OCI-LY7 (cell line): ENCODE measurements at regions of chr3 and their contacts with region 1.

Region 1: DNA sequence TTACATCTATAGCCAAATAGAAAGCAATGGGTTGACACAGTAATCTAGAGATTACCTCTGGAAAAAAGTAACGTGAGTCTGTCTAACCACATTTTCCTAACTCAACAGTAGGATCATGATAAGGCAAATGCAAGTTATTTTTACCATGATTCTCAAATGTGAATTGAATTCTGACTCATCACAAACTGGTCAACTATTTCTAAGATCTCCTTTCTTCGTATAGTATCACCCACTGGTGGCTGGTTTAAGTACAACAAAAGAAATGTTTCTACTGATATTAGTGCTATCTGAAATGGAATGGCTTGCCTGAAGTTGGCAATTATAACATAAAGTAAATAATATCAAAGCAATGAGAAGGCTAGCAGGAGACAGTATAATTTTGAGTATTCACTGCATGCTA is 102.2 kb downstream of the ABI3BP start:
- DNase-seq: no peak
- H3K4me3 ChIP-seq: no peak overlapping the region
- H3K27ac ChIP-seq: no peak overlapping the region
- H3K4me1 ChIP-seq: no peaks in the 10 kb centered on the region
- CTCF ChIP-seq: no peak

Region 2: GRCh38 chr3:100875239-100875638 is 15.8 kb before region 1 on chr3:
- CTCF ChIA-PET with region 1: no interaction called
- POLR2A ChIA-PET with region 1: interaction called, 12 read pairs
- intact Hi-C with region 1: no loop called
- DNase-seq: no peak
- H3K4me3 ChIP-seq: no peak overlapping the region
- H3K27ac ChIP-seq: no peak overlapping the region
- H3K4me1 ChIP-seq: no peaks in the 10 kb centered on the region
- CTCF ChIP-seq: no peak

Region 3: GRCh38 chr3:100913870-100914648 is 23.0 kb after region 1 on chr3:
- CTCF ChIA-PET with region 1: no interaction called
- POLR2A ChIA-PET with region 1: no interaction called
- intact Hi-C with region 1: no loop called
- DNase-seq: no peak
- H3K4me3 ChIP-seq: no peak overlapping the region
- H3K27ac ChIP-seq: no peak overlapping the region
- H3K4me1 ChIP-seq: no peaks in the 10 kb centered on the region
- CTCF ChIP-seq: no peak

Region 4: DNA sequence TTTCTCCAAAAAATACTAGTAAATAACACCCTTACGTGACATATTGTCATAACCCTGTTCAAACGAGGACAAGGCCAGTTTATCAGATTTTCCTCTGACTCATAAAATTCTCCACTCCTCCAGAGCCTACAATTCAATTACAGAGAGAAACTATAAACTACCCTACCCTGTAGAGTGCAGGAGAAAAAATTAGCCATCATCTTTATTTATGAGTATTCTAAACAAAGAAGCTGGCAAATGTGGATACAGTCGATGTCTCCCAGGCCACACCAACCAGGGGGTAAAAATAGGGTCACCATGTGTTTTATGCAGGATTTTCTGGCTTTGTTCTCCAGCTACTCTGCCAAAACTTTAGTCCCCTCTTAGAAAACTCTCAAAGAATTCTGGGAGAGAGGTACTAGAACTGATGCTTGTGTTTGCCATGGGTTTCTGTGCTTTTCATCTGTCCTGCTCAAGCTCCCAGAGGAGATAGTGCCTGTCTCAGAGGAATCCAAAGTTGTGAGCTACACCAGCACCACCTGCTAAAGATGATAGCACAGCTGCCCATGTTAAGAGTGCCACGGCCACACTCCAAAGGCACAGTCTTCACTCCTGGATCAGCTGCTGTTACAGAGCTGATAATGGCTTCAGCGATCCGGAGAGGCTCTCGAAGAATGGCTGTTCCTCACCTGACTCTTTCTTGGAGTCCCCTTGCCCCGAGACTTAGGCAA is 279.2 kb after region 1 on chr3:
- CTCF ChIA-PET with region 1: no interaction called
- POLR2A ChIA-PET with region 1: no interaction called
- intact Hi-C with region 1: no loop called
- DNase-seq: no peak
- H3K4me3 ChIP-seq: no peak overlapping the region
- H3K27ac ChIP-seq: no peak overlapping the region
- H3K4me1 ChIP-seq: no peaks in the 10 kb centered on the region
- CTCF ChIP-seq: no peak